B cell (primary cell): ENCODE measurements at regions of chr2 and their contacts with region 1.

Region 1: GRCh38 chr2:224689539-224689938 is 26.6 kb downstream of the CCDC195 start:
- DNase-seq: no peak
- ATAC-seq: no peak
- H3K4me3 ChIP-seq: no peak overlapping the region
- H3K4me3 Mint-ChIP-seq: no peak overlapping the region
- H3K27ac ChIP-seq: no peak overlapping the region
- H3K27ac Mint-ChIP-seq: no peak overlapping the region
- H3K4me1 ChIP-seq: no peaks in the 10 kb centered on the region
- H3K4me1 Mint-ChIP-seq: no peaks in the 10 kb centered on the region
- H3K27me3 ChIP-seq: no peaks in the 10 kb centered on the region
- H3K27me3 Mint-ChIP-seq: no peaks in the 10 kb centered on the region
- CTCF ChIP-seq: no peak

Region 2: DNA sequence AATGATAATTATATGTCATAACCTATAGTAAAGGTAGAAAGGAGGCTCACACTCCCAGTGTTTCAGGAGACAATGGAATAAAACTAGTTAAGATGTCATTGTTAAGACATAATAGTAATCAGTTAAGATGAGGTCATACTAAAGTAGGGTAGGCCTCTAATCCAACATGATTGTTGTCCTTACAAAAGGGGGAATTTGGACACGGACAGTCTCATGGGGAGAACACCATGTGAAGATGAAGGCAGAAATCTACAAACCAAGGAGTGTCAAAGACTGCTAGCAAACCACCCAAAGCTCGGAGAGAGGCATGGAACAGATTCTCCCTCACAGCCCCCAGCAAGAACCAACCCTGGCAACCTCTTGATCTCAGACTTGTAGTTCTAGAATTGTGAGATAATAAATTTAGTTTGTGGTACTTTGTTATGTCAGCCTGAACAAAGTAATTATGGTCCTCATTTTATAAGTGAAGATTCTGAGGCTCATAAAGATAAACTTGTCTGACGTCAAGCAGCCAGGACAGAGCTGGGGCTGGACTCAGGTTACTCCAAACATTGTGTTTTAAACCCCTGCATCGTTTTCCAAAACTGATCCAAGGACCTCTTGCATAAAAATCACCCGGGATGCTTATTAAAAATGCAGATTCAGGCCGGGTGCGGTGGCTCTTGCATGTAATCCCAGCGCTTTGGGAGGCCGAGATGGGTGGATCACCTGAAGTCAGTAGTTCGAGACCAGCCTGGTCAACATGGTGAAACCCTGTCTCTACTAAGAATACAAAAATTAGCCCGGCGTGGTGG is 21.2 kb before region 1 on chr2:
- CTCF ChIA-PET with region 1: interaction called, 3 read pairs
- POLR2A ChIA-PET with region 1: interaction called, 16 read pairs
- intact Hi-C with region 1: no loop called
- DNase-seq: no peak
- ATAC-seq: no peak
- H3K4me3 ChIP-seq: no peak overlapping the region
- H3K4me3 Mint-ChIP-seq: no peak overlapping the region
- H3K27ac ChIP-seq: no peak overlapping the region
- H3K27ac Mint-ChIP-seq: no peak overlapping the region
- H3K4me1 ChIP-seq: peaks cover 11 to 13% of the 10 kb centered on the region in 2 donors
- H3K4me1 Mint-ChIP-seq: peaks cover 22% of the 10 kb centered on the region
- H3K27me3 ChIP-seq: no peaks in the 10 kb centered on the region
- H3K27me3 Mint-ChIP-seq: no peaks in the 10 kb centered on the region
- CTCF ChIP-seq: no peak

Region 3: DNA sequence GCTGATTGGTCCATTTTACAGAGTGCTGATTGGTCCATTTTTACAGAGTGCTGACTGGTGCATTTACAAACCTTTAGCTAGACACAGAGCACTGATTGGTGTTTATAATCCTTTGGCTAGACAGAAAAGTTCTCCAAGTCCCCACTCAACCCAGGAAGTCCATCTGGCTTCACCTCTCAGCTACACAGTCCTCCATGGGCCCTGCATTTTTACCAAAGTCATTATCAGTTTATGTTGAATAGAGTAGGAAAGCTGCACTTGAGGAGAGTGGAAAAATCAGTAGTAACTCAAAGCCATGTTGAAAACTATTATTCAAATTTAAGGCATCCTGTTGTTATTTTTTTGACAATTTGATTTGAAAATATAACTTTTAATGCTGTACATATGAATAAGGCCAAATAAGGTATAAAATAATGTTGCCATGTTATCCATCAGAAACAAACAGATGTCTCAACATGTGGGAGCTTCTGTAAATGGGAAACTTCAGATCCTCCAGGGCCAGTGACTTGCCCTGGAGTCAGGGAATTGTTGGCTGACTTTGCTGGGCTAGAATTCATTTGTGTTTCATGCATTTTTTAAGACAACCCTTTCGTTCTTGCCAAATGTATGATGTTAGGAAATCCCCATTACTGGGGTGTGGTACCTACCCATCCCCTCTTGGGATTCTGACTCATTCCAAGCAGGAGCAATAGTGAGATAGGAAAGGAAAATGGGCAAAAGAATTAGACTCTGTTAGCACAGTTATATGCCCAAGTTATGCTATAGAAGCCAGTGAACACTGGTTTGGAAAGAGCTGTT is 64.4 kb after region 1 on chr2:
- CTCF ChIA-PET with region 1: no interaction called
- POLR2A ChIA-PET with region 1: interaction called, 11 read pairs
- intact Hi-C with region 1: no loop called
- DNase-seq: no peak
- ATAC-seq: no peak
- H3K4me3 ChIP-seq: no peak overlapping the region
- H3K4me3 Mint-ChIP-seq: no peak overlapping the region
- H3K27ac ChIP-seq: no peak overlapping the region
- H3K27ac Mint-ChIP-seq: no peak overlapping the region
- H3K4me1 ChIP-seq: peaks cover 11 to 13% of the 10 kb centered on the region in 2 donors
- H3K4me1 Mint-ChIP-seq: peaks cover 22% of the 10 kb centered on the region
- H3K27me3 ChIP-seq: no peaks in the 10 kb centered on the region
- H3K27me3 Mint-ChIP-seq: no peaks in the 10 kb centered on the region
- CTCF ChIP-seq: no peak

Region 4: DNA sequence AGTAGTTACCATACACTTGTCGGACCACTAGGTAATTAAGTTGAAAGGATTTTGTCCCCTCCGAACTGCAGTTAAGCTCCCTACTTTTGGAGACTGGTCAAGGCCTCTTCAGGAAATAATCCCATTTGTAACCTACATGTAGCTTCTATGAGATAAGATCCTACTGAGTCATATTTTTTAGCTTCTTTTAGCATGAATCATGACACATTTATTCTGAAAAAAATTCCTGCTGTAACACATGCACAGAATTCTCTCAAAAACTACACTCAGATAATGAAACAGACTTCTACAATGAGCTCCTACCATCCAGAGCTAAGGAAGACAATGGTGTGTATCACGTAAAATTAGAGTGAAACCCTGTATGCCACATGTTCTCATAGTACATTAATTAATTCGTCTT is 127.3 kb after region 1 on chr2:
- CTCF ChIA-PET with region 1: no interaction called
- POLR2A ChIA-PET with region 1: no interaction called
- intact Hi-C with region 1: no loop called
- DNase-seq: no peak
- ATAC-seq: no peak
- H3K4me3 ChIP-seq: no peak overlapping the region
- H3K4me3 Mint-ChIP-seq: no peak overlapping the region
- H3K27ac ChIP-seq: no peak overlapping the region
- H3K27ac Mint-ChIP-seq: peak overlapping the region; percentile 43
- H3K4me1 ChIP-seq: no peaks in the 10 kb centered on the region
- H3K4me1 Mint-ChIP-seq: no peaks in the 10 kb centered on the region
- H3K27me3 ChIP-seq: no peaks in the 10 kb centered on the region
- H3K27me3 Mint-ChIP-seq: no peaks in the 10 kb centered on the region
- CTCF ChIP-seq: no peak

Region 5: DNA sequence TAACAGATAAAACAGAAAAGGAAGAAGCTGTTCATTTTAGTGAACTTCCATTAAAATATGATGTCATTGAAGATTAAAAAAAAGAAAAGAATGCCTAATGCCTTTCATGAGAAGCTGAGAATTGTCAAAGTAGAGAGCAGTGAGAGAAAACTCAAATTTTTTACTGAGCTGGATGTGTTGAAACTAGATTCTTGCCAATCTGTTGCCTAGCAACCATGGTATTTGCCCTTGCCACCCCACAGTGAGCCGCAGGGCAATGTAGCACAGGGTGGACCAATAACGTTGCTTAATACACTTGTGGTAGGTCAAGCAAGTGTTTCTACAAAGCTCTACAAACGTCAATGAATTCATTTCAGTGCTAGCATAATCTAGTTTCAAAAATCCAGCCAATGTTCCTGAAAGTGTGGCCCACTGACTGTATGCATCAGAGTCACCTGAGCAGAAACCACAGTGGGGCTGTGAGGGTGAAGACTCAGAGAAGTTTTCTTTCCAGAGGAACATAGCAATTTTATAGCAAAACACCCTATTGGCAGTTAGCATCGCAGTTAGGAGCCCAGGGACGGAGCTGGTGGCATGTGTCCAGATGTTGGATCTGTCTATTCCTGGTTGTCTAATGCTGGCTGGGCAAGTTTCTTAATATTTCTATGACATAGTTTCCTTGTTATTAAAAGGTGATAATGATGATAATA is 220.5 kb after region 1 on chr2:
- CTCF ChIA-PET with region 1: no interaction called
- POLR2A ChIA-PET with region 1: no interaction called
- intact Hi-C with region 1: no loop called
- DNase-seq: peak; percentile 37
- ATAC-seq: peak; percentile 81
- H3K4me3 ChIP-seq: no peak overlapping the region
- H3K4me3 Mint-ChIP-seq: peak overlapping the region; percentile 60
- H3K27ac ChIP-seq: peak overlapping the region in 1 of 2 donors; percentile 7
- H3K27ac Mint-ChIP-seq: peak overlapping the region; percentile 88
- H3K4me1 ChIP-seq: peaks cover 9 to 13% of the 10 kb centered on the region in 2 donors
- H3K4me1 Mint-ChIP-seq: peaks cover 35% of the 10 kb centered on the region
- H3K27me3 ChIP-seq: no peaks in the 10 kb centered on the region
- H3K27me3 Mint-ChIP-seq: no peaks in the 10 kb centered on the region
- CTCF ChIP-seq: no peak